ENCODE measurements at regions of chr4 and their contacts with region 1.

Region 1: DNA sequence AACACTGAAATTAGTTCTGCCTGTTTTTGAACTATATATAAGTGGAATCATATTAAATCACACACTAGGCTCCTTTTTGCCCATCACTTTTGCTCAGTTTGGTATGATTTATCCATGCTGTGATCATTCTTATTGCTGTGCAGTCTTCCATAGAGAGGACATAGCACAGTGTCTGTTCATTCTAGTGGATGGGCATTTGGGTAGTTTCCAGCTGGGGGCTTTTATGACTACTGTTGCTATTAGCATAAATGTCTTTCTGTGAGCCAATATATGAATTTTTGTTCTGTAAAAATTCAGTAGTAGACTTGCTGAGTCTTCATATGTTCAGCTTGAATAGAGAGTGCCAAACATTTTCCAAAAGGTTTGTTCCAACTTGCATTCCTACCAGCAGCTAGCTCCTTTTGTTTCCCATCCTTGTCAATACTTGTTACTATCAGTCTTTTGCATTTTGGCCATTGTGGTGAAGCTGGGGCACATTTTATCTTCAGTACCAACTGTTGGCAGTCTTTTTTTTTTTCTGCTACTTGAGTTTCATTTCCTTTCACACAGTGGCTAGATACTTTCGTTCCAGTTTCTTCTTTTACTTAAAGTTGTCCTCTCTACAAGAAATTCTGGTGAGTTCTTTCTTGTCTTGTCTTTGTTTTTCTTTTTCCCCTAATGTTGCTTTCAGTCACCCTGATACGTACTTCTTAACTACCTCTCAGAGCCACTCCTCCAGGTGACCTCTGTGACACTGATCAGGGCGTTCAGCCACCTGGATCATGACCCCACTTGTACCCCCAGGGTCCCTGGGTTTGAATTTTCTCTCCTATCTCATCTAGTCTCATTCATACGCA is 87.0 kb downstream of the ANXA3 start:
- DNase-seq: no peak
- H3K4me3 Mint-ChIP-seq: peak overlapping the region; percentile 28
- H3K27ac Mint-ChIP-seq: peak overlapping the region; percentile 89
- H3K4me1 Mint-ChIP-seq: peaks cover 47% of the 10 kb centered on the region
- H3K27me3 Mint-ChIP-seq: peaks cover 7% of the 10 kb centered on the region

Region 2: DNA sequence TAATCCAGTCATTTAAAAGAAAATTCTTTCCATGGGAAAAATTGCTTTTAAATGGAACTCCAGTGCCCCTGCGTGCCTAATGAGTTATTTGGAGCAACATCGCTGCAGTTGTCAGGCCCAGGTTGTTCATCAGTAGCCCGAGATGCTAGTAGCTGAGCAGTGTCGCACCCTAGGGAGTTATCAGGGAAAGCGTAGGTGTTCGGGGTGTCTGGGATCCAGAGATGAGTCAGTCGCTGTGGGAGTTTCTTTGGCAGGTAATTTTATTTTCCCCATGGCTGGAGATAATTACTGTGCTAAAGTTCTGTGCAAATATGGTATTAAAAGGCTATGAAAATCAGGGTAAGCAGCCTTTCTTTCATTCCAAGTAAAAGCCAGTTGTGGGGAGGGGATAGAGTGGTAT is 37.5 kb before region 1 on chr4:
- CTCF ChIA-PET with region 1: no interaction called
- POLR2A ChIA-PET with region 1: no interaction called
- DNase-seq: no peak
- H3K4me3 Mint-ChIP-seq: no peak overlapping the region
- H3K27ac Mint-ChIP-seq: no peak overlapping the region
- H3K4me1 Mint-ChIP-seq: no peaks in the 10 kb centered on the region
- H3K27me3 Mint-ChIP-seq: no peaks in the 10 kb centered on the region

Region 3: DNA sequence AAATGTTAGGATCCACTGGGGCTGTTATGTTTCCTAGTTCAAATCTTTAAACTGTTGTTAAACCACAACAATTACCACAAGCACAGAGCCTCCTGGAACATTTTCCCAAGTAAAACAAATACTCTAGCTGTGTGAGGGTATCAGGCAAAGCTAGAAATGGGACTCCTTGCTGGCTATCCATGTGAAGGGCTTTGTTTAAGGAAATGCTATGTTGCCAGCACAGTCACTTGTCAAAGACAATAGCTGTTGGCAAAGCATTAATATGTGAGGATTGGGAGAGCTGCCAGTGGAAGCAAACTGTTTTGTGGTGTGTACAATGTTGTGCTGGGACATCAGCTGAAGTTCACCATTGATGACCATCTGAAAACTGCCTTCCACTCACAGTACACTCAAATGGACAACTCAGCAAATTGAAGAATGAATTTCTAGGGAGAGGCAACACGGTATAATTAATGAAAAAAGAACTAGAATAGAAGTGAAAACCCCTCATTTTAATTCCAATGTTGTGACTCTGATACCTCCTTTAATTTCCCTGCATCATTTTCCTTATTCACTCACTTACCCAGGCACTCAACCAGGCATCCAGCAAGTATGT is 13.8 kb after region 1 on chr4:
- CTCF ChIA-PET with region 1: interaction called, 6 read pairs
- POLR2A ChIA-PET with region 1: interaction called, 11 read pairs
- DNase-seq: no peak
- H3K4me3 Mint-ChIP-seq: no peak overlapping the region
- H3K27ac Mint-ChIP-seq: no peak overlapping the region
- H3K4me1 Mint-ChIP-seq: peaks cover 38% of the 10 kb centered on the region
- H3K27me3 Mint-ChIP-seq: peaks cover 4% of the 10 kb centered on the region

Measured in activated CD4-positive, alpha-beta T cell treated with anti-CD3 and anti-CD28 coated beads, Interleukin-2, amount 10 ng/mL, durations not matched to agents 7 days and 5 days (primary cell).